ENCODE measurements at regions of chr22 and their contacts with region 1.

Region 1: DNA sequence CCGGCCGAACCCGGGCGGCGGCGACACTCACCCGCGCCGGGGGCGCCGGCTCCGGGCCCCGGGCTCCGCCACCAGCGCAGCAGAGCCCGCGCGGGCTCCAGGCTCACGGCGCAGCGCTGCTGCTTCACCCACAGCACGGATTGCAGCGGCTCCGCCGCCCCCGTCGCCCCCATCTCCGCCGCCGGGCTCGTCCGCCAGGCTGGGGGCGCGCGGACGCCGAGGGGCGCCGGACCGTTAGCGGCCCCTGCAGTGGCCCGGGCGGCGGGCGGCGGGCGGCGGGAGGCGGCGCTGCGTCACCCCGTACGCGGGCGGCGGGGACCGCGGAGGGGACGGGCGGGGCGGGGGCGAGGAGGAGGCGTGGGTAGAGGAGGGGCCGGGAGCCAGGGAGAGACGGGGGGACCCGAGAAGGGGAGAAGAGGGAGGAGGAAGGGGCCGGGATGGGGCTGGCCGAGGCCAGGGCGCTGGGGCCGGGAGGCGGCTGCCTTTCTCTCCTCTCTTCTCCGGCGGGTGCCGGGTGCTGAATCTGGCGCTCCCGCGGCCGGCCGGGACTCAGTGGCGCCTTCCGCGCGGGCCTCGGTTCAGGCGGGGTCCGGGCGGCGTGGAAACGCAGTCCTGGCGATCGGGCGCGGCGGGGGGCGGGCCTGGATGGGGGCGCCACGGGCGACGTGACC is at the start of gene CERK:
- DNase-seq: peak; percentile 84
- ATAC-seq: peak; percentile 59 to 78 (median 69)
- H3K4me3 ChIP-seq: peak within 1 kb of the TSS; percentile 84
- H3K27ac ChIP-seq: peak within 1 kb of the TSS; percentile 96
- H3K4me1 ChIP-seq: peaks cover 61% of the 10 kb centered on the region
- H3K27me3 ChIP-seq: no peaks in the 10 kb centered on the region
- CTCF ChIP-seq: no peak
- total RNA-seq, gene CERK: 26.9 to 38.1 (median 33.9) TPM

Region 2: DNA sequence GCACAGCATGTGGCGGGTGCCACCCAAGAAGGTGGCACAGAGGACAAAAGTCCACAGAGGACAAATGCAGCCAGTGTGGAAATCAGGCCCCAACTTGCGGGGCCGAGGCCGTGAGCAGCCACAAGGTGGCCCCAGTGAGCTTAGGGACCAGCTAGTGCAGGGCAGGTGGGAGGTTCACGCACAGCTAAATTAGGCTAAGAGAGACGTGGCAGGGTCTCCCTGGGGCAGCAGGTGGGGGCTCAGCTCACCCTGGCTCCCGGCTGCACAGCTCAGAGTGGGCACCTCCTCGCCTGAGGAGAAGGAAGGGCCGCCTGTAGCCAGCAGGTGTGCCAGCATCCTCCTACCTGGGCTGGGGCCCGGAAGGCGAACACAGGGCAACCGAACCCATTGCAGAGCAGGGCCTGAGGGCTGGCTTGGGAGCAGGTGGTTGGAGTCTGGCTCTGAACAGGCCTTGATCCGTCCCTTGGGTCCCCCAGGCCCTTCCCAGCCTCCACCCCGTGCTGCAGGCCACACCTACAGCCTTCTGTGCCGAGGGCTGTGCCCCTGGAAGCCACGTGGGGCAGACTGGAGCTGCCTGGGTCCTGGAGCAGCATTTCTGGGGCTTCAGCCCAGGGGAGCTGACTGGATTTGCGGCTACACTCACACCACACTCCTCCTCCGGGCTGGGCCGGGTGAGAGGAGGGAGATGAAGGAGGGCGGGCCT is 174.6 kb before region 1 on chr22:
- intact Hi-C with region 1: loop called in 1 of 2 experiments (anchors 10 kb)
- DNase-seq: peak; percentile 77 to 88
- ATAC-seq: peak; percentile 89 to 94 (median 90)
- H3K4me3 ChIP-seq: peak overlapping the region; percentile 8
- H3K27ac ChIP-seq: no peak overlapping the region
- H3K4me1 ChIP-seq: no peaks in the 10 kb centered on the region
- H3K27me3 ChIP-seq: no peaks in the 10 kb centered on the region
- CTCF ChIP-seq: peak; percentile 75

Region 3: GRCh38 chr22:46576556-46577367 is 161.3 kb before region 1 on chr22:
- intact Hi-C with region 1: loop called in 1 of 2 experiments (anchors 5 kb)
- DNase-seq: peak; percentile 64 to 80
- ATAC-seq: peak; percentile 40 to 44 (median 42)
- H3K4me3 ChIP-seq: peak overlapping the region; percentile 89
- H3K27ac ChIP-seq: peak overlapping the region; percentile 81
- H3K4me1 ChIP-seq: peaks cover 44% of the 10 kb centered on the region
- H3K27me3 ChIP-seq: no peaks in the 10 kb centered on the region
- CTCF ChIP-seq: no peak

Region 4: DNA sequence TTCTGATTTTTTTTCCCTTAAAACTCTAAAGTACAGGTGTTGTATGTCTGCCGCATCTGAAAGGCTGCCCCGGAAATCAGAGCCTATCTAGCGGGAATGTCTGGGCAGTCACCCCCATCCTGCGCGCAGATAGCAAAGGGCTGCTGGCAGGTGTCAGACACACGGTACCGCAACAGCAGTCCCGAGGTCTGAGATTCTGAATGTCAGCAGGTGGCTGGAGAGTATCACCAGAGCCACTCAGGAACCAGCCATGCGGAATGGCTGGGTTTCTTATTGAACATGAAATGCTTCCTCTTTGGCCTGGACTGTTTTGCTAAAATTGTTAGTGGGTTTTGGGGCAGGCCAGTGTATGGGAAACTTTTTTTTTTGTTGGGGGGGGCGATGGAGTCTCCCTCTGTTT is 53.4 kb before region 1 on chr22:
- intact Hi-C with region 1: loop called in 1 of 2 experiments (anchors 5 kb)
- DNase-seq: no peak
- ATAC-seq: no peak
- H3K4me3 ChIP-seq: no peak overlapping the region
- H3K27ac ChIP-seq: no peak overlapping the region
- H3K4me1 ChIP-seq: no peaks in the 10 kb centered on the region
- H3K27me3 ChIP-seq: no peaks in the 10 kb centered on the region
- CTCF ChIP-seq: no peak

Region 5: DNA sequence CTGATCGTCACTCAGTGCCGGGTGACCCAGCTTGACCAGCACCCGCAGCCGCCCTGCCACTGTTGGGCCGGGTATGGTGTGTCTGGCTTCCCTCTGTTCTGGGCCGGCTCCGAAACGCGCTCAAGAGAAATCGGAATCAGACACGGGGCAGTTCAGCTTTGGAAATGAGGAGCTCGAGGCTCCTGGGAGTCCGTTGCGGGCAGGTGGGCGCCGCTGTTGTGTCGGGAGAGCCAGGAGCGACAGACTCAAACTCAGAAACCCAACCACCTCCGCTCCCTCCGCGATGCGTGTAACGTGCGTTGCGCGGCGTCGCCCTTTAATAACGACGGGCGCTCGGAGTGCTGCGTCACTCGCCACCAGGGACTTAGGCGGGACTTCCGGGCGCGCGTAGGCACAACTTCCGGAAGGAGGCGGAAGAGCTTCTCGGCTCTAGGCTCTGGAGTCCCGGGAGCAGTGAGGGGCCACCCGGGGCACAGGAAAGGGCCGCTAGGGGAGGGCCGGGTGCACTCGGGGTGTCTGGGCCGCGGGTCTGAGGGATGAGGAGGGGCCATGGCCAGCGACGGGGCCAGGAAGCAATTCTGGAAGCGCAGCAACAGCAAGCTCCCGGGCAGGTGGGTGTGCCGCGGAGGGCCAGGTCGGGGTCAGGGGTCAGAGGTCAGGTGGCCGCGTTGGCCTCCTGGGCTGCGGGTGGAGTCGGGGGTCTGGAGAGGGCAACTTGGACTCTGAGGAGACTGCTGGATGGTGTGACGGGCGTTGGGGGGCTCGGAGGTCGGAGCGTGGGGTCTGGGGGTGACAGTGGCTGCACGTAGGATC is 24.3 kb after region 1 on chr22 and contains the start of gene TBC1D22A:
- intact Hi-C with region 1: loop called in 1 of 2 experiments (anchors 2 kb)
- DNase-seq: peak; percentile 95 to 98
- ATAC-seq: peak; percentile 93 to 97 (median 95)
- H3K4me3 ChIP-seq: peak within 1 kb of the TSS; percentile 77
- H3K27ac ChIP-seq: peak within 1 kb of the TSS; percentile 96
- H3K4me1 ChIP-seq: peaks cover 12% of the 10 kb centered on the region
- H3K27me3 ChIP-seq: no peaks in the 10 kb centered on the region
- CTCF ChIP-seq: no peak
- total RNA-seq, gene TBC1D22A: 15.7 to 25.0 (median 20.6) TPM